ENCODE measurements at regions of chr15 and their contacts with region 1.

Region 1: GRCh38 chr15:40445421-40445922 is 4.7 kb downstream of the BAHD1 start:
- DNase-seq: no peak

Region 2: GRCh38 chr15:40511472-40512133 is 66.1 kb after region 1 on chr15:
- intact Hi-C with region 1: loop called in 1 of 2 experiments (anchors 2 kb)
- DNase-seq: peak; percentile 90